Ascending aorta (tissue), 2 donors: ENCODE measurements at regions of chr21 and their contacts with region 1.

Region 1: GRCh38 chr21:41879190-41879998 is at the start of gene PRDM15:
- DNase-seq: peak in 1 of 2 donors; percentile 88
- H3K4me3 ChIP-seq: peak within 1 kb of the TSS; percentile 87 to 97
- H3K27ac ChIP-seq: peak within 1 kb of the TSS; percentile 73 to 81
- H3K4me1 ChIP-seq: peaks cover 0 to 2% of the 10 kb centered on the region in 2 donors
- H3K27me3 ChIP-seq: no peaks in the 10 kb centered on the region
- CTCF ChIP-seq: no peak
- total RNA-seq, gene PRDM15: 20.5 TPM

Region 2: GRCh38 chr21:41777951-41778874 is 101.2 kb before region 1 on chr21:
- intact Hi-C with region 1: loop called (anchors 5 kb)
- DNase-seq: peak; percentile 59 to 95
- H3K4me3 ChIP-seq: peak overlapping the region; percentile 37 to 51
- H3K27ac ChIP-seq: peak overlapping the region; percentile 64 to 79
- H3K4me1 ChIP-seq: peaks cover 0 to 3% of the 10 kb centered on the region in 2 donors
- H3K27me3 ChIP-seq: no peaks in the 10 kb centered on the region
- CTCF ChIP-seq: peak; percentile 89 to 97 (median 95)

Region 3: GRCh38 chr21:41926117-41926806 is 46.9 kb after region 1 on chr21:
- intact Hi-C with region 1: loop called (anchors 5 kb)
- DNase-seq: no peak
- H3K4me3 ChIP-seq: peak overlapping the region; percentile 39 to 58
- H3K27ac ChIP-seq: peak overlapping the region; percentile 92 to 97
- H3K4me1 ChIP-seq: peaks cover 12 to 35% of the 10 kb centered on the region in 2 donors
- H3K27me3 ChIP-seq: no peaks in the 10 kb centered on the region
- CTCF ChIP-seq: no peak

Region 4: DNA sequence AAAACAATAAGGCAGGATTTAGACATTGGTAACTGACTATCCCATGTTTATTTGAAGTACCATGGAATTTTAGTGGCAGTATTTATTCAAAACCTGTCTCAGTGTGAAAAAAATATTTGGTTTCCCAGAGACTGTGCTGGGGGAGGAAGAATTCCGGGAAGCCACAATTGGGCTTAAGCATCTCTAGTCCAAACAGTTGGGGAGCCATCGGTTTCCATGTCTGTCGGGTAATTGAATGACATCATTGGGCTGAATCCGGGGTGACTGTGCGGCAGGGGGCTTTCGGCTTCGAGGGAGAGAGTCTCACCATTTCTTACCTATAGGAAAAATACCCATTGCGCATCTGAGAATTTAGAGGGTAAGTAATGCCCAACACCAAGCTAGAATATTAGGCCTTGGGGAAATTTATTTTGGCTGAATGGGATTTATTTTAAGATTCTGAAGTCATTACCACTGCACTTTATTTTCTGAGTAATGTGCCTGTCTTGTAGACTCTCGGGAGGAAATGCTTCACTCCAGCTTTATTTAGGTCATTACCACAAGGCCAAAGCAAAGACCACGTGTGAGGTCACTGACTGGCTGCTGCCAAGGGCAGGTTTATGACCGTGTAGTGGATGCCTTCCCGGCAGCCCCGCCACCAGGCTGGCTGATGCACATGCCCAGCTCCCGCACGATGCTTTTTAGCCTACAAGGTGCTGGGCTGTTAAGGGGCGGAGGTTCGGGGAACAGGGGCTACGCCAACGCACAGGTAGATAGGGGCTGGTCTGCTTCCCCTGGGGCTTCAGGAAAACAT is 168.6 kb after region 1 on chr21:
- intact Hi-C with region 1: loop called (anchors 2 kb)
- DNase-seq: peak; percentile 80 to 96
- H3K4me3 ChIP-seq: no peak overlapping the region
- H3K27ac ChIP-seq: peak overlapping the region; percentile 88 to 90
- H3K4me1 ChIP-seq: peaks cover 4 to 20% of the 10 kb centered on the region in 2 donors
- H3K27me3 ChIP-seq: no peaks in the 10 kb centered on the region
- CTCF ChIP-seq: peak in 2 of 3 experiments; percentile 8 to 27

Region 5: GRCh38 chr21:42117229-42117966 is 238.0 kb after region 1 on chr21:
- intact Hi-C with region 1: loop called (anchors 2 kb)
- DNase-seq: peak in 1 of 2 donors; percentile 89
- H3K4me3 ChIP-seq: peak overlapping the region in 1 of 2 donors; percentile 32
- H3K27ac ChIP-seq: no peak overlapping the region
- H3K4me1 ChIP-seq: no peaks in the 10 kb centered on the region
- H3K27me3 ChIP-seq: no peaks in the 10 kb centered on the region
- CTCF ChIP-seq: peak; percentile 91 to 95 (median 95)